ENCODE measurements at regions of chr1 and their contacts with region 1.

Region 1: GRCh38 chr1:234499119-234499942 is 20.4 kb upstream of the TARBP1 start:
- DNase-seq: peak; percentile 94
- ATAC-seq: peak; percentile 98
- H3K4me3 ChIP-seq: peak overlapping the region; percentile 21
- H3K27ac ChIP-seq: peak overlapping the region; percentile 82
- H3K4me1 ChIP-seq: peaks cover 32% of the 10 kb centered on the region
- H3K27me3 ChIP-seq: no peaks in the 10 kb centered on the region
- CTCF ChIP-seq: peak; percentile 97

Region 2: DNA sequence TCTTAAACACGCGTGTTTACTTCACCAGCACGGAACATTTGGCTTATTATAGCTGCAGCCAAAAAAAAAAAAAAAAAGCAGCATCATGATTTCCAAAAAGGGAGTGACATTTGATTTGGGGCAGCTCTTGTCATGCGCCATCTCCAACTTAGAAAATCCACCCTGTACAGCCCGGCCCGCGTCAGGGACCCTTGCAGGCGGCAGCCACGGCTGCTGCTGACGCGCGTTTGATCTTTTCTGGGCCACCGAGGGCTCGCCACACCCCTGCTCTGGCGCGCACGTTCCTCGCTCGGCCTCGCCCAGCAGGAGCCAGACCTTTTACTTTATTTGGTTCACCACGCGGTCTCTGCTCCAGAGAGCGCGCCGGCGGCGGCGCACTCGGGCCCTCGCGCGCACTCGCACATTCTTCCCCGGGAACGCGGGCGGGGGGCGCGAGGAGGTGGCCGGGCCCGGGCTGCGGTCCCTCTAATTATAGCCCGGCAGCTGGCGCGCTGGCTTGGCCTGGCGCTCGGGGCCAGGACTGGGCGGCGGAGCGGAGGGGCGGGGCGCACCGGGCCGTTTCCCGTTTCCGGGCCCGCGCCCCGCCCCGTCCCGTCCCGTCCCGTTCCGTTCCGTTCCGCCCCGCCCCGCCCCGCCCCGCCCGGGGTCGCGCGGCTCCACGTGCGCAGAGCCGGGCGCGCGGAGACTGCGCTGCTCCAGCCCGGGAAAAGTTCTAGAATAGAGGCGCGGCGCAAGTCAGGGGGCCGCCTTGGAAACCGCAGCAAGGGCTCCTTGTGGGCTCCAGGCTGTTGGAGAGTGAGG is 100.5 kb after region 1 on chr1:
- intact Hi-C with region 1: loop called (anchors 10 kb)
- DNase-seq: peak; percentile 89
- ATAC-seq: peak; percentile 92 to 96
- H3K4me3 ChIP-seq: peak overlapping the region; percentile 59
- H3K27ac ChIP-seq: peak overlapping the region; percentile 100
- H3K4me1 ChIP-seq: peaks cover 64% of the 10 kb centered on the region
- H3K27me3 ChIP-seq: no peaks in the 10 kb centered on the region
- CTCF ChIP-seq: no peak

Region 3: DNA sequence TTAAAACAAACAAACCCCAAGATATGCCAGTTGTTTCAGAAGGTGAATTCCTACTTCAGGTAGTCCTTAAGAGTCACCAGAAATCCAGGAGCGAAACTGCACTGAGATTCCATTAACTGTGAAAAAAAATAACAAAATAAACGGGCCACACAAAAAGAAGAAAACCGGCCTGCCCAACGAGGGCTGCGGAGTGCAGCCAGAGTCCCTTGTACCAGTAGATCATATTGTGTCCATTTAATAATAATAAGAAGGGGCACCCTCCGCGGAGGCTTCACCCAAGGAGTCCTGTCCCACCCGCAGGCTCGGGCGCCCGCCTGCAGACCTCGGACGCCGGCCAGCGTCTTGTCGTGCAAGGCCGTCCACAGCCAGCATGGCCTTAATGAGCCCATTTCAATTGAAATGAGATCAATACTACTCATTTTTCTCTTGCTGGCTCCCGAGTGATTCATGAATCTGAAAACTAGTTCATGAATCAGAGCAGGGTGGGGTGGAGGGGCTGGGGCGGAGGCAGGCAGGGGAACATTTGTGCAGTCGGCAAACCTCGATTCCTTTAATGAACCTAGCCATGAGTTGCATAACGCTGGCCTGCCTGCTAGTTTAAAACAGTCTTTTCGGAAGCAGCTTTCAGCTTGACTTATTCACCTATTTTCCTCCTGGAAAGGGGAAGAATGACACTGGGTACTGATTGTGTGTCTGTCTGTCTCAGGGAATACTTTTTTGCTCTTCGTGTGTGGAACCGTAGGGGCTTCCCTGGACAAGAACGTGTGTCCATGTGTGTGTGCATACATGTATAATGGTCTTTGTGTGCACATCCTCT is 223.8 kb after region 1 on chr1:
- intact Hi-C with region 1: loop called (anchors 5 kb)
- DNase-seq: no peak
- ATAC-seq: peak; percentile 39 to 52
- H3K4me3 ChIP-seq: peak overlapping the region; percentile 10
- H3K27ac ChIP-seq: peak overlapping the region; percentile 99
- H3K4me1 ChIP-seq: peaks cover 97% of the 10 kb centered on the region
- H3K27me3 ChIP-seq: no peaks in the 10 kb centered on the region
- CTCF ChIP-seq: no peak

Region 4: DNA sequence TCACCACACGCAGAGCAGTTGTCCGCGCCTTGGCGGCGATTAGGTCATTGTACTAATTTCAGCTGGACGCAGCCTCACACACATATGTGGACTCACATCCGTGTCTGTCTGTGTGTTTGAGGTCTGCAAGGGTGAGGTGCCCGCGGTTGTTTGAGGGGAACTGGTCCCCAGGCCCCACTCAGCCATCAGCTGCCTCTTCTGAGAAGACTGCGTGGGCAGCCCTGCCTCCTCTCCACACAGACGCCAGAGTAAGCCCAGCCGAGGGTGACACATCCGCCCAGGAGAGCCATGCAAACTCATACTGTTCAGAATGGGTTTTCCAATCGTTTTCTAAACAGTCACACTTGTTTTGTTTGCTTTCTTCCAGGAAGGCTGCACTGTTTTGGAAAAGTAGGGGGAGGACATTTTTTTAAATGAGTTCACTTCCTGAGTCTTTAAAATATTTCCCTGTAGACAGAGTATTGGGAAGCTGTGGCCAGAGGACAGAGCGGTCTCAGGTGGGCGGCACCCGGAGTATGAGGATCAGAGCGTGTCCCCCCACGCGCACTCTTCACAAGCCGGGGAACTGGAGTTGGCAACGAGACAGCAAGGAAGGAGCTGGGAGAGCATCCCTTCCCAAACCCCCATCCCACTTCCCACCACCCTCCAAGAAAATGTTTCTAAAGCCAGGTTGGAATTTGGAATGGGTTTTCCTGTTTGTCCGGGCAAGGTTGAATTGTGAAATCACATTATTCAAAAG is 576.0 kb after region 1 on chr1:
- intact Hi-C with region 1: loop called (anchors 5 kb)
- DNase-seq: peak; percentile 81
- ATAC-seq: peak; percentile 69 to 81
- H3K4me3 ChIP-seq: peak overlapping the region; percentile 4
- H3K27ac ChIP-seq: peak overlapping the region; percentile 84
- H3K4me1 ChIP-seq: peaks cover 84% of the 10 kb centered on the region
- H3K27me3 ChIP-seq: no peaks in the 10 kb centered on the region
- CTCF ChIP-seq: no peak